ENCODE measurements at regions of chr16 and their contacts with region 1.

Region 1: DNA sequence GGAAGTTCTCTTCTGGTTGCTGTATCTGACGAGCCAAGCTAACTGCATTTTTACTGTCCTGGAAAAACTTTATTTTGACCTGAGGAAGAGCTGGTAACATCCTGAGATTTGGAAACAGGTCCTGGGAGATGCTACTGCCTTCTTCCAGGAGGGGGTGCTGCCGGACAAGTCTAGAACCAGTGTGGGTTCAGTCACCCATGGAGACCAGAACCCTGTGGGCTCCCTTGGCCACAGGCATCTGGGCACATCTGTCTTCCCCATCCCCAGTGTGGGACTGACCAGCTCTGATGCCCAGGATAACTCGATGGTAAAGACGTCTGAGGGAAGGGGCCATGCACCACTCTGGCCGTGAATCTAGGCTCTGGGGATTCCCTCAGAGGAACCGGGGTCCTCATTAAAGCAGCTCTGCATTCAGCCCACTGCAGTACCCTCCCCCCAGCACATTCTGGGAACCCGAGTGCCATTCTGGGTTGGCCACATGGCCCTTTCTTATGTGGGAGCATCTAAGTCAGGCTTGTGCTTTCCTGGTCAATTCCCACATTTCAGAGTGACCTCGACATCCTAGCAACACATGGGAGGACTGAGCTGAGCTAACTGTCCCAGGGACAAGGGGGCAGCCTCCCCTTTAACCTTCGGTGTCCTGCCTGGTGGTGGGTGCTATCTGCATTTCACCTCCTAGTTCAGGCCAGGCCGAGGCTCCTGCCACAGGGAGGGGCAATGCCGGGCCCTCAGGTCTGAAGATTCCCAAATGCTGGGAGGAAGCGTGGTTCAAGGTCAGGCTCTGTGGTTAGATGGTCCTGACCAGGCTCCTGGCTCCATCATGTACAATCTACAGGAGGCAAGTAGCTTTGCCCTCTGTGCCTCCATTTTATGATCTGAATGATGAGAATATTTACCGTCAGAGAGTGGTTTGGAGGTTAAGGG is 6.4 kb downstream of the C16orf86 start:
- DNase-seq: peak in 4 of 5 donors; percentile 62 to 75 (median 75)
- ATAC-seq: peak; percentile 36 to 69 (median 53)
- H3K4me3 ChIP-seq: peak overlapping the region in 1 of 12 donors; percentile 12
- H3K27ac ChIP-seq: peak overlapping the region; percentile 47 to 91 (median 76)
- H3K4me1 ChIP-seq: peaks cover 8 to 45% (median 26%) of the 10 kb centered on the region in 12 donors
- H3K27me3 ChIP-seq: no peaks in the 10 kb centered on the region
- CTCF ChIP-seq: peak; percentile 65 to 83 (median 76)
- POLR2A ChIP-seq: no peak

Region 2: GRCh38 chr16:67055712-67056487 is 617.1 kb before region 1 on chr16:
- intact Hi-C with region 1: no loop called
- DNase-seq: no peak
- ATAC-seq: peak in 1 of 4 donors; percentile 29
- H3K4me3 ChIP-seq: no peak overlapping the region
- H3K27ac ChIP-seq: no peak overlapping the region
- H3K4me1 ChIP-seq: peaks cover 0 to 40% (median 0%) of the 10 kb centered on the region in 12 donors
- H3K27me3 ChIP-seq: no peaks in the 10 kb centered on the region
- CTCF ChIP-seq: no peak
- POLR2A ChIP-seq: no peak

Region 3: GRCh38 chr16:67284699-67285646 is 388.0 kb before region 1 on chr16:
- intact Hi-C with region 1: no loop called
- DNase-seq: peak in 2 of 5 donors; percentile 34 to 53
- ATAC-seq: peak; percentile 42 to 80 (median 68)
- H3K4me3 ChIP-seq: no peak overlapping the region
- H3K27ac ChIP-seq: no peak overlapping the region
- H3K4me1 ChIP-seq: no peaks in the 10 kb centered on the region
- H3K27me3 ChIP-seq: no peaks in the 10 kb centered on the region
- CTCF ChIP-seq: peak in 11 of 12 donors; percentile 24 to 61 (median 39)
- POLR2A ChIP-seq: no peak

Region 4: DNA sequence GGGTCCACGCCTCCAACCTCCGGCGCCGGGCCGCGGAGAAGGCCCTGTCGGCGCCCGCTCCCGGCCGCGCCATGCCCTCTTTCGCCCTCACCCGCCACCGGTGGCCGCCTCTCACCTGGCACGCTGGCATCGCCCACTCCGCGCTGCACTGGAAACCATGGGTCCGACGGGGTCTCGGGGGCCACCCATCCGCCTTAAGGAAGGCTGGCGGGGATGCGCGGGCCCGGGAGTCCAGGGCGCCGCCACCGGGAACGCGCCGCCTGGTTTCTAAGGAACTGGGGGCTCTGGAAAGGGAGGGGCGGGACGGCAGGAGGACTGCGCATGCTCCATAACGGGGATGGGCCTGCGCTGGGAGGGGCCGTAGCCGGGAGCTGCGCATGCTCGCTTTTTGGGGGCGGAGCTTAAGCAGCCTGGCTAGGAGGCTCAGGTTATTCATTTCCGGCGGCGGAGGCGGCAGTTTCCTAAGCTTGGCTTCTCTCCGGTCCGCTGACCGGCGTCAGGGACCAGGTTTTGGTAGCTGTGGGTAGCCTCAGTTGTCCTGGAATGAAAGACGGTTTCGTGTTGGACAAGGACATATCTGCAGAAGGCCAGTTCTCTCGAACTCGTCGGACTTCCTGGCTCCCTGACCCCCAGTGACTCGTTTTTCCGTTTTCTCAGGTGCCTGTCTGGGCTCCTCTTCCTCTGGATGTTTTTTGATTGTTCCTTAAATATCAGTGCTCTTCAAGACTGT is 46.2 kb after region 1 on chr16 and contains the start of gene GFOD2:
- intact Hi-C with region 1: loop called in 6 of 10 experiments (anchors 1 to 5 kb)
- DNase-seq: peak; percentile 97 to 99 (median 97)
- ATAC-seq: peak; percentile 99
- H3K4me3 ChIP-seq: peak within 1 kb of the TSS; percentile 62 to 100 (median 90)
- H3K27ac ChIP-seq: peak within 1 kb of the TSS; percentile 77 to 95 (median 88)
- H3K4me1 ChIP-seq: peaks cover 0 to 35% (median 22%) of the 10 kb centered on the region in 12 donors
- H3K27me3 ChIP-seq: no peaks in the 10 kb centered on the region
- CTCF ChIP-seq: peak in 1 of 12 donors; percentile 17
- POLR2A ChIP-seq: peak in 1 of 2 donors; percentile 94
- total RNA-seq, gene GFOD2: 6.5 to 11.7 (median 9.8) TPM

Region 5: DNA sequence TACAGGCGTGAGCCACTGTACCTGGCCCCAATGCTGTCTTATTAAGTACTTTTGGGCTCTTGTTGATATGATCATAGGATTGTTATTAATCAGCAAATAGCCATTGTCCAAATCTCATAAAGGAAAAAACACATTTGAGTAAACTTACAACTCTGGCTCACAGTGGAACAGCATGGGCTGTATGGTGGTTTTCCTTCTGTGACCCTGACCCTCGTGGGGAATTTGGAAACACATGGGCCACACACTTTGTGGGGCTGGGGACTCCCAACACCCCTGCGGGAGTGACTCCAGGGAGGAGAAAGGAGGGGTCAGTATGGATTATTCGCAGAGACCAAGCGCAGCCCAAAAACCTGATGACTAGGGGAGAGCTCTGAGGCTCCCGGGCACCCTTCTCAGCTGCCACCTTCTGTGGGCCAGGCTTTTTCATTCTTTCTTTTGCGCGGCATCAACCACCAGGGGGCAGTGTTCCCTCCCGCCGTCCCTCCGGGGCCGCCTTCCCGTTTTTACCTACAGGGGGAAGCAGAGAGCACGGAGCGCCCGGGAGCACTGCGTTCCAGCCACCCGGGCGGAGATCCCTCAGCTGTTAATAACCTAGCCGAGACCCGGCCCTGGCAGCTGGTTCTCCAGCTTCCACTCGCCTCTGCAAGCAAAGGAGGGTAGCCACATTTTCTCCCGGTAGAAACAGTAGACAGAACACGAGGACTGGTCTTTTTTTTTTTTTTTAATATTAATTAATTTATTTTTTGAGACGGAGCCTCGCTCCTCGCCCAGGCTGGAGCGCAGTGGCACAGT is 143.4 kb after region 1 on chr16:
- intact Hi-C with region 1: loop called in 1 of 10 experiments (anchors 5 kb)
- DNase-seq: peak; percentile 85 to 92 (median 87)
- ATAC-seq: peak; percentile 79 to 97 (median 96)
- H3K4me3 ChIP-seq: peak overlapping the region in 1 of 12 donors; percentile 28
- H3K27ac ChIP-seq: no peak overlapping the region
- H3K4me1 ChIP-seq: peaks cover 0 to 6% (median 0%) of the 10 kb centered on the region in 12 donors
- H3K27me3 ChIP-seq: no peaks in the 10 kb centered on the region
- CTCF ChIP-seq: peak; percentile 100
- POLR2A ChIP-seq: peak in 1 of 2 donors; percentile 10

Region 6: DNA sequence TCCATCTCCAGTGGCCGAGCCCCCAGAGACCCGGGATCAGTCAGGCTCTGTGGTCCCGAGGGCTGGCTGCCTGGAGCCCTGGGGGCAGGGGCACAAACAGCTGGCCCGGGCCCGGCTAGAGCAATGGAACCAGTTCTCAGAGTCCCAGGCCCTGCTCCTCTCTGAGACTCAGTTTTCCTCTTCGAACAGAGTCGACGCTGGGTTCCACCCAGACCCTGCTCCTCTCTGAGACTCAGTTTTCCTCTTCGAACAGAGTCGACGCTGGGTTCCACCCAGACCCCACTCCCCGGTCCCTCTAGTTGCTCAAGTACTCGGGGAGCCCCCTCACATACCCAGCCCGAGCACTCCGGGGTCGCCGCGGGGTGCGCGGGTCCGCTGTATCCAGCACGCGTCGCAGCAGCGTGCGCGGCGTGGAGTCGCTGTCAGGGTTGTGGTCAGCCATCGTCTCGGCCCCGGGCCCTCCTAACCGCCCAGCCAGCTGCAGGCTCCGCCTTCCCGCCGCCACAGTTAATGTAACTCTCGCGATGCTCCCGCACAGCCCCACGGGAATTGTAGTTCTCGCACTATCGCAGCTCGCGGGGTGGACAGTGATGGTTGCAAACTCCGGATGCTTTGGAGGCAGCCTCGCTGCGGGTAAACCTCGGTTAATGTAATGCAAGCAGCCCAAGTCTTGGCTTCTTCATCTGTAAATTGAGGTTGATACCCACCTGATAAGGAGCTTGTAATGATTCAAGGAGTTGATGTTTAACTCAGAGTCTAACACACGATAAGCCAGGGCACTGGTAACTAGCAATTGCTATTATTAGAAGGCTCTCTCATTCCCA is 160.6 kb after region 1 on chr16:
- intact Hi-C with region 1: loop called in 3 of 10 experiments (anchors 5 to 10 kb)
- DNase-seq: peak; percentile 94 to 98 (median 95)
- ATAC-seq: peak; percentile 96 to 99 (median 98)
- H3K4me3 ChIP-seq: peak overlapping the region; percentile 60 to 94 (median 81)
- H3K27ac ChIP-seq: peak overlapping the region in 11 of 12 donors; percentile 3 to 86 (median 71)
- H3K4me1 ChIP-seq: peaks cover 0 to 19% (median 14%) of the 10 kb centered on the region in 12 donors
- H3K27me3 ChIP-seq: no peaks in the 10 kb centered on the region
- CTCF ChIP-seq: peak in 1 of 12 donors; percentile 21
- POLR2A ChIP-seq: peak; percentile 45 to 63

Region 7: DNA sequence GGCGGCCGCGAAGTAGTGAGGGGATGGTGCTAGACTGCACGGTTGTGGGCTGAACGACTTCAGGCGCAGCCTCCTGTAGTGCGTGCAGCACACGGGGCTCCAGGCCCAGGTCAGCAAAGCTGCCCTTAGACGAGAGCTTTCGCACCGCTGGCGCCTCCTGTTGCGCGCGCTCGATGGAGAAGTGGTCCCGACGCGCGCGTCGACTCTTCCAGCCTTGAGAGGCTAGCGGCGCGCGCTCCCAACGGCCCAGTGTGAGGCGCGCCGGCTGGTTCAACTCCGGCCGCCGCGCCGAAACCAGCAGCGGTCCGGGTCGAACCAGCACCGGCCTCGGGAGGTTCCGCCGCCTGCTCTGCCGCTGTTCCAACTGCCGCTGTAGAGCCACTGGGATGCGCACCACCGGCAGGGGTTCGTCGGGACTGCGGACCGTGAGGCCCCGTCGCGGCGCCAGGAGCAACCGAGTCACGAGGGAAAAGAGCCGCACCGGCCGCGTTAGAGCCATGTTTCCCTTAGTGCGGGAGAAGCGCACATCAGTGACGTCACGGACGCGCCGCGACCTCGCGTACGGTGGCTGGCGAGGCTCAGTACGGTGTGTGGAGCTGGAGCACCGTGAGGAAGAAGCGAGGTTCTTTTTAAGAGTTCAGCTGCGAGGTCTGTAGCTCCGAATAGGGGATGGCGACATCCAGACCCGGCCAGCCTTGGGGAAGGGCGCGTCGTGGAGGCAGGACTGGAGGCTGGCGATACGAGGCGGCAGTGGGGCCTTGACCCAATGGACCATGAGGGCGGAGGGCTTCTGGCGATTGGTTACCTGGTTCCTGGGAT is 349.9 kb after region 1 on chr16 and contains the starts of genes DDX28 and DUS2:
- intact Hi-C with region 1: loop called in 1 of 10 experiments (anchors 10 kb)
- DNase-seq: peak; percentile 91 to 96 (median 94)
- ATAC-seq: peak; percentile 87 to 99 (median 98)
- H3K4me3 ChIP-seq: peak within 1 kb of the TSS; percentile 59 to 98 (median 92)
- H3K27ac ChIP-seq: peak within 1 kb of the TSS; percentile 37 to 95 (median 88)
- H3K4me1 ChIP-seq: peaks cover 3 to 30% (median 21%) of the 10 kb centered on the region in 12 donors
- H3K27me3 ChIP-seq: no peaks in the 10 kb centered on the region
- CTCF ChIP-seq: peak in 1 of 12 donors; percentile 4
- POLR2A ChIP-seq: peak in 1 of 2 donors; percentile 58
- total RNA-seq, gene DDX28: 4.4 to 11.9 (median 8.8) TPM
- total RNA-seq, gene DUS2: 3.8 to 11.5 (median 7.2) TPM

Region 8: GRCh38 chr16:68059804-68060203 is 386.8 kb after region 1 on chr16:
- intact Hi-C with region 1: loop called in 2 of 10 experiments (anchors 10 kb)
- DNase-seq: no peak
- ATAC-seq: no peak
- H3K4me3 ChIP-seq: no peak overlapping the region
- H3K27ac ChIP-seq: peak overlapping the region in 5 of 12 donors; percentile 25 to 54 (median 35)
- H3K4me1 ChIP-seq: peaks cover 0 to 41% (median 10%) of the 10 kb centered on the region in 12 donors
- H3K27me3 ChIP-seq: no peaks in the 10 kb centered on the region
- CTCF ChIP-seq: no peak
- POLR2A ChIP-seq: no peak

Measured in heart left ventricle (tissue), 16 donors.